ENCODE measurements at regions of chr1 and their contacts with region 1.

Region 1: DNA sequence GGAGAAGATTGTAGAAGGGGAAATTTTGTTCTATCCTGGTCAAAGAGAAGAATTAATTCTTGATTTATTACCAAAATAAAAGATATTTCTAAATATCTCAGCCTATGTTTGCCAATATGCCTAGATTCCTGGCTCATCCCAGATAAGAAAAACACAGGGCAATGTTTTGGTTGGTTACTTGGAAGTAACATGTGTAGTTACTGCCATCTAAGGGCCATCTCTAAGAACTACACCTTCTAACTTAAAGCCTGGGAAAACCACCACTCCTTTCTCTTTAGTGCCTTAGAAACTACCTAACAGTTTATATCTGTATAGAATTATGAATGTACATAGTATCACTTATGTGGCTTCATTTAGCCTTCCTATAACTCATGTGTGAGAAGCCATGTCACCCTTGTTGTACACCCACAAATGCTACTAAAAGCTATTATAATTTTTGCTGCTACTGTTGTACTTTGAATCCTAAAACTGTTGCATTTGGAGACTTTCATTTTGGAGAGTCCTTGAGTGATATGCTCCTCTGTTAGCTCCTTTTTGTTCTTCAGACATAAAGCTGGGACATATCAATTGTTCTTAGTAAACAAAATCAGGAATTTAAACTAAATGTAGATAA is 4.5 kb downstream of the AIM2 start:
- DNase-seq: peak; percentile 80
- ATAC-seq: peak; percentile 99
- H3K4me3 ChIP-seq: no peak overlapping the region
- H3K27ac ChIP-seq: no peak overlapping the region
- H3K4me1 ChIP-seq: no peaks in the 10 kb centered on the region
- H3K27me3 ChIP-seq: no peaks in the 10 kb centered on the region
- CTCF ChIP-seq: peak; percentile 78
- POLR2A ChIP-seq: no peak
- RAD21 ChIP-seq: peak; percentile 83

Region 2: GRCh38 chr1:158203693-158204457 is 868.2 kb before region 1 on chr1:
- CTCF ChIA-PET with region 1: interaction called, 25 read pairs
- POLR2A ChIA-PET with region 1: no interaction called
- dilution Hi-C with region 1: no loop called
- in situ Hi-C with region 1: loop called (anchors 5 kb)
- intact Hi-C with region 1: loop called (anchors 1 kb)
- DNase-seq: peak; percentile 76
- ATAC-seq: peak; percentile 93
- H3K4me3 ChIP-seq: no peak overlapping the region
- H3K27ac ChIP-seq: no peak overlapping the region
- H3K4me1 ChIP-seq: no peaks in the 10 kb centered on the region
- H3K27me3 ChIP-seq: no peaks in the 10 kb centered on the region
- CTCF ChIP-seq: peak; percentile 66
- POLR2A ChIP-seq: no peak
- RAD21 ChIP-seq: peak; percentile 56

Region 3: DNA sequence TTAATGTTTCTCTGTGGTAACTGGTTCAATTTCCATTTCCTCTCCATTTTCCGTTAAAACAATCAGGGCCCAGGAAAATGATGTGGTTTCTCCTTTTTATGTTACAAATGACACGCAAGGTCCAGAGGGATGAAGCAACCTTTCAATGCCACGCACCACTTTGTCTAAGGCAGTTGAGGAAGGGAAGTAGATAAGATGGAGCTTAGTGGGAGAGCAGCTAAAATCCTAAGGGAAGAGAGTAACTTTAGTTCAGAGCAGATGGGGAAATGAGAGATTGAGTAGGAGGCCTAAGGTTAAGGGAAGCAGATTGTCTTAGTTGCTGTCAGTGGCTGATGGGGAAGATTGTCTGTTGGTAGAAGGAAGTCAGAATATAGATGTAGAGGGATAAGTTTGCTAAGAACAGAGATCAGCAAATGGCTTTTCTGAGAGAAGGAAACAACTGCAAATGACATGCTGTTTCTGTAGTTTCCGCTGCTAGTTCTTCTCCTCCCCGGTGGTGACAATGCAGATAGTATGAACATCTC is 781.7 kb before region 1 on chr1:
- CTCF ChIA-PET with region 1: no interaction called
- POLR2A ChIA-PET with region 1: no interaction called
- dilution Hi-C with region 1: no loop called
- in situ Hi-C with region 1: no loop called
- intact Hi-C with region 1: no loop called
- DNase-seq: no peak
- ATAC-seq: no peak
- H3K4me3 ChIP-seq: no peak overlapping the region
- H3K27ac ChIP-seq: no peak overlapping the region
- H3K4me1 ChIP-seq: no peaks in the 10 kb centered on the region
- H3K27me3 ChIP-seq: no peaks in the 10 kb centered on the region
- CTCF ChIP-seq: no peak
- POLR2A ChIP-seq: no peak
- RAD21 ChIP-seq: no peak

Region 4: DNA sequence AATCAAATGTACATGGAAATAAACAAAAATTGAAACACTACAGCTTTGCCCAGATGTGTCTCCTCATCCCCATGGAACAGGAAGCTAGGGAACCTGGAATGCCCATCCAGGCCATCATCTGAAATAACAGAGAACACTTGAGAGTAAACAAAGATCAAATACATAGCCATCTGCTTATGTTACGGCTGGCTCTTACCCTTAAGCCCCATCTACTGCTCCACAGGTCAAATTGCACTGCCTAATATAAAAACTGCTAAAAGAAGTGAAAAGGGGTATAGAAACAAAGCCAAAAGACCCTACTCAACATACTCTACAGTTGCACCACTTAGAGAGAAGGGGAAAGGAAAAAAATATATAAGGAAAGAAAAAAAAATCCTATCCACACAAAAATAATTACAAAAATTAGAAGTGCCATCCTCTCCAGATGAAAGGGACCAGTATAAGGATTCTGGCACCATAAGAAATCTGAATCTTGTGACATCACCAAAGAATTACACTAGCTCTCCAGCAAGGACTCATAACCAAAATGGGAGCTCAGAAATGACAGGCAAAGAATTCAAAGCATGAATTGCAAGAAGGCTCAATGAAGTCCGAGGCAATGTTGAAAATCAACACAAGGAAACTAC is 544.8 kb before region 1 on chr1:
- CTCF ChIA-PET with region 1: no interaction called
- POLR2A ChIA-PET with region 1: no interaction called
- dilution Hi-C with region 1: no loop called
- in situ Hi-C with region 1: no loop called
- intact Hi-C with region 1: loop called (anchors 10 kb)
- DNase-seq: peak; percentile 27
- ATAC-seq: no peak
- H3K4me3 ChIP-seq: no peak overlapping the region
- H3K27ac ChIP-seq: no peak overlapping the region
- H3K4me1 ChIP-seq: no peaks in the 10 kb centered on the region
- H3K27me3 ChIP-seq: no peaks in the 10 kb centered on the region
- CTCF ChIP-seq: peak; percentile 41
- POLR2A ChIP-seq: no peak
- RAD21 ChIP-seq: no peak

Region 5: DNA sequence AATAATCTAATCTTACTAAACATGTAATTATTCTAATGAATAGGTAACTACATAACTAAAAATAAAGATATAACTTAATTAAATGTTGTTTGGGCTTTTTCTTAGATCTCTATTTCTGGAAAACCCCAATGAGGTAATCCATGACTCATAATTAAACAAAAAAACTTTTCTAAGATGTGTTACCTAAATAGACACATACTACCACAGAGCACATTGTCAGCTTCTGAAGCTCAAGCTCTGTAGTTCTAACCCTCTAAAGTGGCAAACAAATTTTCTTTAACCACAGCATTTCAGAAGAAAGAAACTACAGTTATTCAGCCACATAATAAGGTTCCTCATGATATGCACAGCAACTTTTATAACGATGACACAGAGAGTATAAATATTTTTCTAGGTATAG is 355.7 kb before region 1 on chr1:
- CTCF ChIA-PET with region 1: no interaction called
- POLR2A ChIA-PET with region 1: no interaction called
- dilution Hi-C with region 1: no loop called
- in situ Hi-C with region 1: no loop called
- intact Hi-C with region 1: no loop called
- DNase-seq: peak; percentile 0
- ATAC-seq: no peak
- H3K4me3 ChIP-seq: no peak overlapping the region
- H3K27ac ChIP-seq: no peak overlapping the region
- H3K4me1 ChIP-seq: no peaks in the 10 kb centered on the region
- H3K27me3 ChIP-seq: no peaks in the 10 kb centered on the region
- CTCF ChIP-seq: no peak
- POLR2A ChIP-seq: no peak
- RAD21 ChIP-seq: no peak

Region 6: DNA sequence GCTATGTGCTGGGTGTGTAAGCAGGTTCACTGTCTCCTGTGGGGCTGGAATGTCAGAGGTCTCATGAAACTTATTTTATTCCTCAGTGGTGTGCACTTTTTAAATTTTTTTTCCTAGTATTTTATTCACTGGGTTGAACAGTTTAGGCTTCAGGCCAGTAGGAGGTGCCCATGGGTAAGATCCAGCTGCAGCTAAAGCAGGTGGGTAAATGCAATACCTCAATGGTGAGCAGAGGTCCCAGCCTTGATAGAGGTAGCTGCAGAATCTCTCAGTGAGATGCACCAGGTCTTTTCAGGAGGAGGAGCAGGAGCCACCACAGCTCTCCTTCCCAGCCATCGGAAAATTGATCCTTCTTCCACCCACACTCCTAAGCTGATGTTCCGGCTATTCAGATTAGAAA is 278.5 kb before region 1 on chr1:
- CTCF ChIA-PET with region 1: no interaction called
- POLR2A ChIA-PET with region 1: no interaction called
- dilution Hi-C with region 1: no loop called
- in situ Hi-C with region 1: no loop called
- intact Hi-C with region 1: loop called (anchors 10 kb)
- DNase-seq: no peak
- ATAC-seq: no peak
- H3K4me3 ChIP-seq: no peak overlapping the region
- H3K27ac ChIP-seq: no peak overlapping the region
- H3K4me1 ChIP-seq: no peaks in the 10 kb centered on the region
- H3K27me3 ChIP-seq: no peaks in the 10 kb centered on the region
- CTCF ChIP-seq: peak; percentile 22; the same call in 1 of the 2 replicates
- POLR2A ChIP-seq: no peak
- RAD21 ChIP-seq: no peak

Region 7: GRCh38 chr1:158998781-158999161 is 73.3 kb before region 1 on chr1:
- CTCF ChIA-PET with region 1: interaction called, 3 read pairs
- POLR2A ChIA-PET with region 1: no interaction called
- dilution Hi-C with region 1: no loop called
- in situ Hi-C with region 1: no loop called
- intact Hi-C with region 1: loop called (anchors 2 kb)
- DNase-seq: peak; percentile 61
- ATAC-seq: peak; percentile 59
- H3K4me3 ChIP-seq: peak overlapping the region; percentile 61
- H3K27ac ChIP-seq: peak overlapping the region; percentile 36; the same call in 1 of the 2 replicates
- H3K4me1 ChIP-seq: no peaks in the 10 kb centered on the region
- H3K27me3 ChIP-seq: no peaks in the 10 kb centered on the region
- CTCF ChIP-seq: peak; percentile 90
- POLR2A ChIP-seq: no peak
- RAD21 ChIP-seq: peak; percentile 78

Region 8: GRCh38 chr1:159492575-159493323 is 420.7 kb after region 1 on chr1:
- CTCF ChIA-PET with region 1: no interaction called
- POLR2A ChIA-PET with region 1: no interaction called
- dilution Hi-C with region 1: no loop called
- in situ Hi-C with region 1: no loop called
- intact Hi-C with region 1: no loop called
- DNase-seq: no peak
- ATAC-seq: no peak
- H3K4me3 ChIP-seq: no peak overlapping the region
- H3K27ac ChIP-seq: no peak overlapping the region
- H3K4me1 ChIP-seq: no peaks in the 10 kb centered on the region
- H3K27me3 ChIP-seq: no peaks in the 10 kb centered on the region
- CTCF ChIP-seq: no peak
- POLR2A ChIP-seq: no peak
- RAD21 ChIP-seq: no peak